Activated T-helper 2 cell treated with anti-CD3 and anti-CD28 coated beads, Interferon-gamma antibody, Interleukin-2, Interleukin-4, amounts not matched to agents 10 μg/mL and 5 μg/mL and 100 μg/mL, durations not matched to agents 14 hours and 24 hours and 36 hours (primary cell): ENCODE measurements at regions of chr13 and their contacts with region 1.

Region 1: GRCh38 chr13:32581177-32581786 is 5.0 kb upstream of the PDS5B start:
- DNase-seq: no peak
- H3K4me3 Mint-ChIP-seq: no peak overlapping the region
- H3K27ac Mint-ChIP-seq: no peak overlapping the region
- H3K4me1 Mint-ChIP-seq: peaks cover 9% of the 10 kb centered on the region
- H3K27me3 Mint-ChIP-seq: peaks cover 5% of the 10 kb centered on the region

Region 2: GRCh38 chr13:32381539-32381938 is 199.7 kb before region 1 on chr13:
- intact Hi-C with region 1: loop called (anchors 1 kb)
- DNase-seq: no peak
- H3K4me3 Mint-ChIP-seq: no peak overlapping the region
- H3K27ac Mint-ChIP-seq: no peak overlapping the region
- H3K4me1 Mint-ChIP-seq: no peaks in the 10 kb centered on the region
- H3K27me3 Mint-ChIP-seq: no peaks in the 10 kb centered on the region

Region 3: GRCh38 chr13:32472194-32472621 is 109.1 kb before region 1 on chr13:
- intact Hi-C with region 1: loop called (anchors 2 kb)
- DNase-seq: no peak
- H3K4me3 Mint-ChIP-seq: no peak overlapping the region
- H3K27ac Mint-ChIP-seq: peak overlapping the region; percentile 84
- H3K4me1 Mint-ChIP-seq: peaks cover 16% of the 10 kb centered on the region
- H3K27me3 Mint-ChIP-seq: no peaks in the 10 kb centered on the region

Region 4: GRCh38 chr13:32491028-32491427 is 90.3 kb before region 1 on chr13:
- intact Hi-C with region 1: no loop called
- DNase-seq: no peak
- H3K4me3 Mint-ChIP-seq: no peak overlapping the region
- H3K27ac Mint-ChIP-seq: no peak overlapping the region
- H3K4me1 Mint-ChIP-seq: no peaks in the 10 kb centered on the region
- H3K27me3 Mint-ChIP-seq: no peaks in the 10 kb centered on the region

Region 5: DNA sequence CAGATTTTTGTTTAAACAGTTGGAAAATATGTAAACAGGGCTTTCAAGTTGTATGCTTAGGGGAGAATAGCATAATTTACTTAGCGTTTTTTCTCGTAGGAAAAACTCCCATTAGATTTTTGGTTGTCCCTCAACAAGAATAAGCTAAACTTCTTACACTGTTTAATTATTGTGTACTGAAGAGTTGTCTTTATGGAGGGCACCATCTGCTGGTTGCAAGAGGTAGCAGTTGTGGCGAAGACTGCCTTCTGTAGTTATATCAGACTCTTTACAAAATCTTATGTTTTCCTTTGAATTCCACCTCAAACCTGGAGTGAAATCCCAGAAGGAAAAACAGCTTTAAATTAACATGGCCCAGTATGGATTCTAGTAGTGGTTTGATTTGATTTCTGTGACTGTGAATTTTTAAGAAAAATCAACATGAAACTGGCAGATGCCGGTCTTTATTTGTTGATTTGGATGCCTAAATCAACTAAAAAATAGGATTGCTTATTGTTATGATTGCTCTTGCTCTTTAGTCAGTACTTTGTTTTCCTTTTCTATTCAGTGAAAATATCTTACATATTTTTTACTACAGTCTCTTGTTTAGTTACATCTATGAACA is 58.3 kb after region 1 on chr13:
- intact Hi-C with region 1: no loop called
- DNase-seq: no peak
- H3K4me3 Mint-ChIP-seq: no peak overlapping the region
- H3K27ac Mint-ChIP-seq: no peak overlapping the region
- H3K4me1 Mint-ChIP-seq: peaks cover 29% of the 10 kb centered on the region
- H3K27me3 Mint-ChIP-seq: no peaks in the 10 kb centered on the region